Activated CD4-positive, alpha-beta T cell treated with anti-CD3 and anti-CD28 coated beads, Interleukin-2, amount 10 ng/mL, durations not matched to agents 24 days and 14 days (primary cell): ENCODE measurements at regions of chrX and their contacts with region 1.

Region 1: GRCh38 chrX:120560842-120561633 is at the start of gene CUL4B:
- DNase-seq: peak; percentile 97
- H3K4me3 Mint-ChIP-seq: peak within 1 kb of the TSS; percentile 99
- H3K27ac Mint-ChIP-seq: peak within 1 kb of the TSS; percentile 99
- H3K4me1 Mint-ChIP-seq: peaks cover 21% of the 10 kb centered on the region
- H3K27me3 Mint-ChIP-seq: no peaks in the 10 kb centered on the region
- total RNA-seq, gene CUL4B: 30.4 and 30.5 TPM in 2 replicates

Region 2: DNA sequence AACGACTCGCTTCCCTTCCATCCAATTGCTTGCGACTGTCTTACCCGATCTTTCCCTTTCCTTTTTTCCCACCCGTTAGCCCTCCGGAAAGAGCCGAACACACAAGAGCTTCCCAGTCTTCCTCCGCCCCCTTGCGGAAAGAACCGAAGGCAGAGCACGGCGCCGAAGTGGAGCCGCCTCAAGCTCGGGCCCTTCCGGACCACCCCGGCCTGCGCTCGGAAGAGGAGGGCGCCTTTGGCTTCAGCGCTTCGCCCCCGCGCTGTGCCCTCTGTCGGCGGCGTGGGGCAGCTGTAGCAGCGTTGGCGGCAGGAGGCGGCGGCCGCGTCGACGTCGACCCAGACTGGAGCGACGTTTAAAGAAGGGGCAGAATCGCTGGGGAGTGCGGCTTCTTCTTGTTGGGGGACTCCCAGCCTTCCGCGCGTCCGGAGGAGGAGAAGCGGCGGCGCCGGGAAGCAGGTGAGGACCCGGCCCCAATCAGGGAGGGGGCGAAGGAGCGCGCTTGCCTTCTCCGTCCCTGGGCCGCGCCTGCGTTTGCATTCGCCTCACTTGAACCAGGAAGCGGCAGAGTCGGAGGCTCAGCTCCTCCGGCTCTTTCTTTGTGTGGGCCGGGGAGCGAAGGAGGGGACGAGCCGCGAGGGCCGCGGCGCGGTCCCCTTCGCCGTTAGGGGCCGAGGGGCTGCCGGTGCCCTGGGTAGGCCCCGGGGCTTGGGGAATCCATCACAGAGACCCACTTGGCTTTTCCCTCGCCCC is 310.3 kb before region 1 on chrX and contains the start of gene ZBTB33:
- intact Hi-C with region 1: loop called (anchors 2 kb)
- DNase-seq: peak; percentile 95
- H3K4me3 Mint-ChIP-seq: peak within 1 kb of the TSS; percentile 88
- H3K27ac Mint-ChIP-seq: peak within 1 kb of the TSS; percentile 95
- H3K4me1 Mint-ChIP-seq: peaks cover 9% of the 10 kb centered on the region
- H3K27me3 Mint-ChIP-seq: no peaks in the 10 kb centered on the region
- total RNA-seq, gene ZBTB33: 14.4 and 14.6 TPM in 2 replicates

Region 3: DNA sequence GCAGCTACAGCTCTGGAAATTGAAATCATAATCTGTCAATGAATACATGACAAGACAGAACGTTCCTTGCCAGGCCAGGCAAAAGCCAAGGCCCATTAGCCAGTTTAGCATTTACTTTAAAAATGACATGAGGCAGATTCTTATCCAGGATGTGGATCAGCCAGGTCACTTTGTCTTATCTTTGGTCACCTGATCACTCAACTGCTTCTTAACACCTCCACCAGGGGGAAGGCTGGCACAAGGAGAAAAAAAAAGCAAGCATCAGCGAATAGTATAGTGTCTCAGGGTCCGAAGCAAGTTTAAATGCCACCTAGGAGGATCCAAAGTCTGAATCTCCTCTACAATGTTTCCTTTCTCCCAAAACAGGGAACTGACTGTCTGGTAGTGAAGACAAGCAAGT is 180.3 kb before region 1 on chrX:
- intact Hi-C with region 1: no loop called
- DNase-seq: peak; percentile 74
- H3K4me3 Mint-ChIP-seq: no peak overlapping the region
- H3K27ac Mint-ChIP-seq: no peak overlapping the region
- H3K4me1 Mint-ChIP-seq: no peaks in the 10 kb centered on the region
- H3K27me3 Mint-ChIP-seq: peaks cover 8% of the 10 kb centered on the region

Region 4: DNA sequence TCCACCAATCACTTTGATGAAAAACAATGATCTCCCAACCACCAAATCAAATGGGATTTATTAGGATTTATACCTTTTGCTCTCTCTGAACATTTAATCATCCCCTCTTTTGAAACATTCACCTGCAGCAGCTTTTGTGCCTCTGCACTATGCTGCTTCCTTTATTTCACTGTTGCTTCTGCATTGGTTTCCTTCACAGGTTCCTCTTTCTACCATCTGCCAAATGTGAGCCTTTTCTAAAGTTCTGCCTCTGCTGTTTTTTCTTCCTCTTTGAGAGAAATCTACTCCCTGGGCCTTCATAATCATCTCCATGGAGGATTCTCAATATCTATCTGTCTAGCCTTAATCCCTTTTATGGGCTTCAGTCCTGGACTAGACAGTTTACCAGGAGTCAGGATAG is 25.0 kb before region 1 on chrX:
- intact Hi-C with region 1: no loop called
- DNase-seq: no peak
- H3K4me3 Mint-ChIP-seq: no peak overlapping the region
- H3K27ac Mint-ChIP-seq: no peak overlapping the region
- H3K4me1 Mint-ChIP-seq: peaks cover 3% of the 10 kb centered on the region
- H3K27me3 Mint-ChIP-seq: no peaks in the 10 kb centered on the region

Region 5: DNA sequence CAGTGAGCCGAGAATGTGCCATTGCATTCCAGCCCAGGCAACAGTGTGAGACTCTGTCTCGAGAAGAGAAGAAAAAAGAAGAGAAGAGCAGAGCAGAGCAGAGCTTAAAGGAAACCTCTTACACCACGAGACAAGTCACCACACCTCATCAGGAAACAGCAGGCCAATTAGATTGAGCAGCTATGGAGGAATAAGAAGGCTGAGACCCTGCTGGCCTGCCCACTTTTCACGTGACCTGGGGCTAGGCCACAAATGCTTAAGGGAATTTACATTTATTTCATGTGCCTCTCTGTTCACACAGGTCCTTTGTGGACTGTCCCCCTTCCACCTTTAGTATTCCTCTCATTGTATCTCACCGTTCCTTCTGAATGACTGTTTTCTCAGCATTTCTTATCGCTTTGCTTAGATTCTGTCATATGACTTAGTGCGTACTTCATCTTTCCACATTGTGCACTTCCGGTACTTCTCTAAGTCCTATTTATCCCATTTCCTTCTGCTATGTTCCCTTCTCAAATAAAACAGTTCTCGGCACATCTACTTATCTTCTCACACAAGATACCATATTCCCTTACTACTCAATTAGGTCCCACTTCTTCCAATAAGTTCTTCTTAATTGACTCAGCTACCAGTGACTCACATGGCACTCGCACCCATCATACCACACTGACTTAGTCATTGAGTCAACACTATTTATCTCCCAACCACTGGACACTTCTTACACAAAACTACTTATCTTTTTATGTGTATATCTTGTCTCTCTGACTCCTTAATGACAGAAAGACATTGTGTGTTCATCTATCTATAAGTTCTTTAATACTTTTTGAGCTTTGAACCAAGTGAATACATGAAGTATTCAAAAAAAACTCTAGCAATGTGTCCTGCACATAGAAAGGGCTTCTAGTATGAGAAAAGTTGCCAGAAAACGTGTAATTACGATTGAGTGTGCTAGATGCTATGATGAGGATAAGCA is 11.3 kb before region 1 on chrX:
- intact Hi-C with region 1: loop called (anchors 1 kb)
- DNase-seq: no peak
- H3K4me3 Mint-ChIP-seq: no peak overlapping the region
- H3K27ac Mint-ChIP-seq: peak overlapping the region; percentile 20
- H3K4me1 Mint-ChIP-seq: peaks cover 11% of the 10 kb centered on the region
- H3K27me3 Mint-ChIP-seq: no peaks in the 10 kb centered on the region

Region 6: GRCh38 chrX:120603707-120604360 is 42.8 kb after region 1 on chrX and contains the start of gene MCTS1:
- intact Hi-C with region 1: loop called (anchors 1 kb)
- DNase-seq: peak; percentile 94
- H3K4me3 Mint-ChIP-seq: peak within 1 kb of the TSS; percentile 97
- H3K27ac Mint-ChIP-seq: peak within 1 kb of the TSS; percentile 96
- H3K4me1 Mint-ChIP-seq: peaks cover 2% of the 10 kb centered on the region
- H3K27me3 Mint-ChIP-seq: peaks cover 1% of the 10 kb centered on the region
- total RNA-seq, gene MCTS1: 78.5 and 79.0 TPM in 2 replicates

Region 7: DNA sequence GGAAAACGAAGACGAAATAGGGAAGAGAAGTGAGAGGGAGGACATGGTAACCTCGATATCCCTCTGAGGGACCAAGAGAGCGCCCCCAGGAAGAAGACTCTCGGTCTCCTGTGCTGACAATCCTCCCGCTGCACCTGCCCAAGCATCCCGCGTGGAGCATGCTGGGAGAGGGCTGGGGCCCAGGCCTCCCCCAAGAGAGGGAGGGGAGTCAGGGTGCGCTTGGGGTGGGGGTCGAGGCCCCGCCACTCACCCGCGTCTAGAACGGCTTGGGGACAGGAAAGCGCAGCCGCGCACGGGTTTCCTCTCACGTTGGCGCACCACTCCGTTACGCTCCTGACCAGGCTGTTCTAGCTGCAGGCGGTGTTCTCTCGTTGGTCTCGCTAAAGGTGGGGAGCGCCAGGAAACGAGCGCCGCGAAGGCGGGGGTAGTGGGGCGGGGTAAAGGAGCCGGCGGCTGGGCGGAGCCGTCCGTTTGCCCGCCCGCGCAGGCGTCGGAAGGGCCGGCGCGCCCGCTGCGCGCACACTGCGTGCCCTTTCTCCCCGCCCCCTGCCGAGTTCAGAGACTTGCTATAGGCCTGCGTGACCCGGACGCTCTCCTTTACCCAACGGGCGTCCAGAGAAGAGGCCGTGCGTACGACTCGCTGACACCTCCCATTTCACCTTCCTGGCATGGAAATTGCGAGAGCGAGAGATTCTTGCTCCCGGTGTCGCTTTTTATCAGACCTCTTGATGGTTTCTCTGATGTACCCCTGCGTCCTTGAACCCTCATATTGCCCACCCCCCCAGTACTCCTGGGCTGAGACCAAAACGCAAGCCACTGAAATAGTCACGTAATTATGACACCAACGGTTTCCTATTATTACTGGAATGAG is 68.9 kb after region 1 on chrX and contains the start of gene C1GALT1C1:
- intact Hi-C with region 1: loop called (anchors 1 kb)
- DNase-seq: peak; percentile 97
- H3K4me3 Mint-ChIP-seq: peak within 1 kb of the TSS; percentile 94
- H3K27ac Mint-ChIP-seq: peak within 1 kb of the TSS; percentile 97
- H3K4me1 Mint-ChIP-seq: peaks cover 15% of the 10 kb centered on the region
- H3K27me3 Mint-ChIP-seq: no peaks in the 10 kb centered on the region
- total RNA-seq, gene C1GALT1C1: 21.1 and 21.7 TPM in 2 replicates

Region 8: DNA sequence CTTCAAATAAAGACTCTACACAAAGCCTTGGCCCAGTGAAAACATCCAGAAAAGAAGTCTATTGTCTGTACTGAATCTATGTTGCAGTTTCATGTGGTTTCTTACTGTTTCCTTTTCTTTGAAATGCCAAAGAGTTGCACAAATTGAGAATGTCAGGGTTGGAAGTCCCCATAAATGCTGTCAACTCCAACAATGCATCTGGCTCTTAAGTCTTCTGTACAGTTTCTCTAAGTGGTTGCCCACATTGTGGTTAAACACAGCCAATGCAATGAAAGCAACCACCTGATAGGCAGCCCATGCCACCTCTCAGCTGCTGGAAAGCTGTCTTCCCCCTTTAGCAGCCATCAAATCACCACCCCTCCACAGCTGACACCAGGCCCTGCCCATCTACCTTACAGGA is 136.0 kb after region 1 on chrX:
- intact Hi-C with region 1: loop called (anchors 1 kb)
- DNase-seq: peak; percentile 88
- H3K4me3 Mint-ChIP-seq: peak overlapping the region; percentile 70
- H3K27ac Mint-ChIP-seq: peak overlapping the region; percentile 96
- H3K4me1 Mint-ChIP-seq: peaks cover 17% of the 10 kb centered on the region
- H3K27me3 Mint-ChIP-seq: no peaks in the 10 kb centered on the region